ENCODE measurements at regions of chr16 and their contacts with region 1.

Region 1: DNA sequence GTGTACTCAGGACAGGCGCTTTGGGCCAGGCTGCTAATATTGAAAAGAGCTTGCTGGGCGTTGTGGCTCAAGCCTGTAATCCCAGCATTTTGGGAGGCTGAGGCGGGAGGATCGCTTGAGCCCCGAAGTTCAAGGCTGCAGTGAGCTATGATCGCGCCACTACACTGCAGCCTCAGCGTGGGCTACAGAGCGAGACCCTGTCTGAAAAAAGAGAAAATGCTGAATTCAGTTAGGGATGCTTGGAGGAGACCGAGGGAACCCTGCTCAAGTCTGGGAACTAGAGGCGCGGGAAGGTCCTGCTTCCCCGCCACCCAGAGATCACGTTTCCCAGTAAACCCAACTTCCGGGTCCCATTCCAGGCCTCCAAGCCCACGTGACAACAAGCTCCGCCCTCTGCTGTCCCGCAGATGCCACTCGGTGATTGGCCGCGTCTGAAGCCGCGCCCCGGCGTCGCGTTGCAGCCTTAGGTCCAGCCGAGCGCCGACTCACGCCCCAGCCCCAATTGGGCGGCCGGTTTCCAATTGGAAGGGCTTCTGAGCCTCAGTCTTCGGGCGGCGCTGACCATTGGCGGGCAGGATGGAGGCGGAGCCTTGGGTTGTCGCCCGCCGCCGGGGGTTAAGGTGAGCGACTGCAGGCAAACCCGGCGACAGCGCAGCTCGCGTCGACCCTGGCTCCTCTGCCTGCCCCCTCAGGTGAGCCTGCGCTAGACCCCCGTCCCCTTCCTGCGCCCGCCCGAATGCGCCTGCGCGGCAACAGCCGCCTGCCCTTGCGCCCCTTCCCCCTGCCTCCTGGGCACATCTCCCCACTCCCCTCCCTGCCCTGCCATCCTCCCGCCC is at the start of gene PHKG2:
- H3K4me3 ChIP-seq: peak within 1 kb of the TSS; percentile 87
- H3K27ac ChIP-seq: peak within 1 kb of the TSS; percentile 48
- H3K4me1 ChIP-seq: peaks cover 3% of the 10 kb centered on the region; the same call in 1 of the 2 replicates
- CTCF ChIP-seq: peak; percentile 10; the same call in 1 of the 2 replicates

Region 2: GRCh38 chr16:30571695-30572600 is 176.1 kb before region 1 on chr16 and contains the start of gene ZNF688:
- CTCF ChIA-PET with region 1: no interaction called
- POLR2A ChIA-PET with region 1: no interaction called
- H3K4me3 ChIP-seq: peak within 1 kb of the TSS; percentile 64
- H3K27ac ChIP-seq: peak within 1 kb of the TSS; percentile 96
- H3K4me1 ChIP-seq: peaks cover 5% of the 10 kb centered on the region; the same call in 1 of the 2 replicates
- CTCF ChIP-seq: no peak; the same call in 1 of the 2 replicates

Region 3: GRCh38 chr16:30710971-30711370 is 37.0 kb before region 1 on chr16:
- CTCF ChIA-PET with region 1: no interaction called
- POLR2A ChIA-PET with region 1: interaction called, 14 read pairs
- H3K4me3 ChIP-seq: no peak overlapping the region
- H3K27ac ChIP-seq: no peak overlapping the region
- H3K4me1 ChIP-seq: no peaks in the 10 kb centered on the region
- CTCF ChIP-seq: no peak

Region 4: DNA sequence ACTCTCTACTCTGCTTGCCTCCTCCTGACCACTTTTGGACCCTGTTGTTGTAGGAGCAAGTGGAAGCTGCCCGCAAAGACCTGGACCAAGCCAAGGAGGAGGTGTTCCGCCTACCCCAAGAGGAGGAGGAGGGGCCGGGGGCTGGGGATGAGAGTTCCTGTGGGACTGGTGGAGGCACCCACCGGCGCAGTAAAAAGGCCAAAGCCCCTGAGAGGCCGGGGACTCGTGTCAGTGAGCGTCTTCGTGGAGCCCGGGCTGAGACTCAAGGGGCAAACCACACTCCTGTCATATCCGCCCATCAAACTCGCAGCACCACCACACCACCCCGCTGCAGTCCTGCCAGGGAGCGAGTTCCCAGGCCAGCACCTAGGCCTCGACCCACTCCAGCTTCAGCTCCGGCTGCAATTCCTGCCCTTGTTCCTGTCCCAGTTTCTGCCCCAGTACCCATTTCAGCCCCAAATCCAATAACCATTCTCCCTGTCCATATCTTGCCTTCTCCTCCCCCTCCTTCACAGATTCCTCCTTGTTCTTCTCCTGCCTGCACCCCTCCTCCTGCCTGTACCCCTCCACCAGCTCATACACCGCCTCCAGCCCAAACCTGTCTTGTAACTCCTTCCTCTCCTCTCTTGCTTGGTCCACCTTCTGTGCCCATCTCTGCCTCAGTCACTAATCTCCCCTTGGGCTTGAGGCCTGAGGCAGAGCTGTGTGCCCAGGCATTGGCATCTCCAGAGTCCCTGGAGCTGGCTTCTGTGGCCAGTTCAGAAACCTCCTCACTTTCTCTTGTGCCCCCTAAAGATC is 10.8 kb before region 1 on chr16:
- CTCF ChIA-PET with region 1: interaction called, 3 read pairs
- POLR2A ChIA-PET with region 1: interaction called, 25 read pairs
- H3K4me3 ChIP-seq: no peak overlapping the region
- H3K27ac ChIP-seq: no peak overlapping the region
- H3K4me1 ChIP-seq: no peaks in the 10 kb centered on the region
- CTCF ChIP-seq: no peak

Region 5: GRCh38 chr16:30775392-30776188 is 27.6 kb after region 1 on chr16:
- CTCF ChIA-PET with region 1: no interaction called
- POLR2A ChIA-PET with region 1: interaction called, 34 read pairs
- H3K4me3 ChIP-seq: peak overlapping the region; percentile 76
- H3K27ac ChIP-seq: peak overlapping the region; percentile 92
- H3K4me1 ChIP-seq: no peaks in the 10 kb centered on the region; the same call in 1 of the 2 replicates
- CTCF ChIP-seq: no peak; the same call in none of the 2 replicates

Region 6: GRCh38 chr16:30842946-30843345 is 94.9 kb after region 1 on chr16:
- CTCF ChIA-PET with region 1: no interaction called
- POLR2A ChIA-PET with region 1: no interaction called
- H3K4me3 ChIP-seq: no peak overlapping the region
- H3K27ac ChIP-seq: no peak overlapping the region
- H3K4me1 ChIP-seq: no peaks in the 10 kb centered on the region
- CTCF ChIP-seq: no peak